ENCODE measurements at regions of chr3 and their contacts with region 1.

Region 1: GRCh38 chr3:101573449-101574387 is at the start of gene PCNP:
- DNase-seq: peak; percentile 99
- ATAC-seq: peak; percentile 85
- H3K4me3 Mint-ChIP-seq: peak within 1 kb of the TSS; percentile 93
- H3K27ac Mint-ChIP-seq: peak within 1 kb of the TSS; percentile 89
- H3K4me1 Mint-ChIP-seq: peaks cover 59% of the 10 kb centered on the region
- H3K27me3 Mint-ChIP-seq: no peaks in the 10 kb centered on the region
- total RNA-seq, gene PCNP: 138 to 172 TPM

Region 2: DNA sequence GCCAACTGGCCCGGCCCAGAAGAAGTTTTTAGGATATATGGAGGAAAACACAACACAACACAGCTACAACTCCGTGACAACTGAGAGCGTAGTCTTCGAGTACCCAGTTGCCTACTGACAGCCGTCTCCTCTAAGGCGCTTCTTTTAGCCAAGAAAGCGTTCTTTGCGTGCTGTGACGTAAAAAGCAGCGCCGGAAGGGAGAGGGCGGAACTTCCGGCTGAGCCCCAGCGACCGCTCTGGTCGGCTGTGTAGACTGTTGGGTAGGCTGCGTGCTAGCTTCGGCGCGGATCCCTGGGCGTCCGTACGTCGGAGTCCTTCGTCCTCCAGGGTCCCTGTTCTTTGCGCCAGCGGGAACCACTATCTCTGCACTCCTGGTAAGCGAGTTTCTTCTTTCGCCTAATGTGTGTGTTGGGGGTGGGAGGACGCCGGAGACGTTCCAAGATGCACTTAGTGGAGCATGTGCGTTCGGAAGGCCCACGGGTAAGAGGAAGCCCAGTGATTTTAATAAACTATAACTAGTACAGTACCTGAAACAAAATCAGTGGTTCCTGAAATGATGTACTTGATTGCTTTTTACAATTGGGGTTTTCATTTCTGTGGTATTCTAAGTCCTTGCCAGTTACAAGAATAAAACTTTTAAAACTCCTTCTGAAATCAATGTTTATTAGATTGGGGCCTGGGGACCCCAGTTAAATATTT is 11.9 kb before region 1 on chr3 and contains the start of gene TRMT10C:
- CTCF ChIA-PET with region 1: interaction called, 18 read pairs
- DNase-seq: peak; percentile 96
- ATAC-seq: peak; percentile 98
- H3K4me3 Mint-ChIP-seq: peak within 1 kb of the TSS; percentile 99
- H3K27ac Mint-ChIP-seq: peak within 1 kb of the TSS; percentile 97
- H3K4me1 Mint-ChIP-seq: peaks cover 37% of the 10 kb centered on the region
- H3K27me3 Mint-ChIP-seq: peaks cover 2% of the 10 kb centered on the region
- total RNA-seq, gene TRMT10C: 24.1 to 32.9 TPM

Region 3: GRCh38 chr3:101676765-101677435 is 103.2 kb after region 1 on chr3 and contains the start of gene ZBTB11:
- CTCF ChIA-PET with region 1: interaction called, 11 read pairs
- DNase-seq: peak; percentile 100
- ATAC-seq: peak; percentile 74
- H3K4me3 Mint-ChIP-seq: peak within 1 kb of the TSS; percentile 86
- H3K27ac Mint-ChIP-seq: peak within 1 kb of the TSS; percentile 98
- H3K4me1 Mint-ChIP-seq: peaks cover 44% of the 10 kb centered on the region
- H3K27me3 Mint-ChIP-seq: no peaks in the 10 kb centered on the region
- total RNA-seq, gene ZBTB11: 30.3 to 31.3 TPM

Region 4: GRCh38 chr3:101685870-101686412 is 112.2 kb after region 1 on chr3:
- CTCF ChIA-PET with region 1: interaction called, 10 read pairs
- DNase-seq: no peak
- ATAC-seq: peak; percentile 20
- H3K4me3 Mint-ChIP-seq: peak overlapping the region; percentile 100
- H3K27ac Mint-ChIP-seq: peak overlapping the region; percentile 95
- H3K4me1 Mint-ChIP-seq: peaks cover 36% of the 10 kb centered on the region
- H3K27me3 Mint-ChIP-seq: no peaks in the 10 kb centered on the region

Region 5: GRCh38 chr3:101703169-101703568 is 129.5 kb after region 1 on chr3:
- CTCF ChIA-PET with region 1: no interaction called
- DNase-seq: no peak
- ATAC-seq: no peak
- H3K4me3 Mint-ChIP-seq: no peak overlapping the region
- H3K27ac Mint-ChIP-seq: no peak overlapping the region
- H3K4me1 Mint-ChIP-seq: no peaks in the 10 kb centered on the region
- H3K27me3 Mint-ChIP-seq: no peaks in the 10 kb centered on the region

Measured in activated CD8-positive, alpha-beta memory T cell treated with anti-CD3 and anti-CD28 coated beads, Interleukin-2, amount 10 ng/mL, durations not matched to agents 7 days and 5 days (primary cell).